ENCODE measurements at regions of chr18 and their contacts with region 1.

Region 1: GRCh38 chr18:1914490-1914889 is 656.8 kb downstream of the METTL4 start:
- DNase-seq: peak; percentile 22
- ATAC-seq: peak; percentile 90
- H3K4me3 ChIP-seq: no peak overlapping the region
- H3K27ac ChIP-seq: no peak overlapping the region
- H3K4me1 ChIP-seq: no peaks in the 10 kb centered on the region
- H3K27me3 ChIP-seq: no peaks in the 10 kb centered on the region
- CTCF ChIP-seq: peak; percentile 29 to 70 (median 60); a peak in 5 of 6 replicates
- POLR2A ChIP-seq: no peak
- RAD21 ChIP-seq: peak; percentile 58

Region 2: GRCh38 chr18:1676387-1676786 is 238.1 kb before region 1 on chr18:
- CTCF ChIA-PET with region 1: no interaction called
- POLR2A ChIA-PET with region 1: no interaction called
- RAD21 ChIA-PET with region 1: no interaction called
- intact Hi-C with region 1: no loop called
- DNase-seq: no peak
- ATAC-seq: no peak
- H3K4me3 ChIP-seq: no peak overlapping the region
- H3K27ac ChIP-seq: no peak overlapping the region
- H3K4me1 ChIP-seq: no peaks in the 10 kb centered on the region
- H3K27me3 ChIP-seq: no peaks in the 10 kb centered on the region
- CTCF ChIP-seq: no peak
- POLR2A ChIP-seq: no peak
- RAD21 ChIP-seq: no peak

Region 3: DNA sequence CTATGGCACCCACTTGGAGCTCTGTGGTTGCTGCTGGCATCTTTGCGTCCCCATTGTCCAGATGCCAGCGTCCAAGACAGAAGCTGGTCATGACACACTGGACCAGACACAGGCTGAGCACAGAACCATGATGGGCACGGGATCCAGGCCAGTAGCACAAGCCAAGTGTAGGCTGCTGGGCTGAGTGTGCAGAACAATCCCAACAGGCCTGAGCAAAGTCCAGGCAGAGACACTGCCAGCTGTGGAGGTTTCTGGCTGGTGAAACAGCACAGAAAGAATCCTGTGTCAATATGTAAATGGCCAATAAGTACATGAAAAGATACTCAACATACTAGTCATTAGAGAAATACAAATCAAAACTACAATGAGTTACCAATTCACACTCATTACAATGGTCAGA is 48.6 kb before region 1 on chr18:
- CTCF ChIA-PET with region 1: no interaction called
- POLR2A ChIA-PET with region 1: no interaction called
- RAD21 ChIA-PET with region 1: no interaction called
- intact Hi-C with region 1: no loop called
- DNase-seq: no peak
- ATAC-seq: no peak
- H3K4me3 ChIP-seq: no peak overlapping the region
- H3K27ac ChIP-seq: no peak overlapping the region
- H3K4me1 ChIP-seq: no peaks in the 10 kb centered on the region
- H3K27me3 ChIP-seq: peaks cover 3% of the 10 kb centered on the region; the same call in 1 of the 2 replicates
- CTCF ChIP-seq: no peak
- POLR2A ChIP-seq: no peak
- RAD21 ChIP-seq: no peak

Region 4: GRCh38 chr18:1982056-1982455 is 67.6 kb after region 1 on chr18:
- CTCF ChIA-PET with region 1: no interaction called
- POLR2A ChIA-PET with region 1: no interaction called
- RAD21 ChIA-PET with region 1: no interaction called
- intact Hi-C with region 1: no loop called
- DNase-seq: no peak
- ATAC-seq: no peak
- H3K4me3 ChIP-seq: no peak overlapping the region
- H3K27ac ChIP-seq: no peak overlapping the region
- H3K4me1 ChIP-seq: no peaks in the 10 kb centered on the region
- H3K27me3 ChIP-seq: no peaks in the 10 kb centered on the region
- CTCF ChIP-seq: no peak
- POLR2A ChIP-seq: no peak
- RAD21 ChIP-seq: no peak

Region 5: DNA sequence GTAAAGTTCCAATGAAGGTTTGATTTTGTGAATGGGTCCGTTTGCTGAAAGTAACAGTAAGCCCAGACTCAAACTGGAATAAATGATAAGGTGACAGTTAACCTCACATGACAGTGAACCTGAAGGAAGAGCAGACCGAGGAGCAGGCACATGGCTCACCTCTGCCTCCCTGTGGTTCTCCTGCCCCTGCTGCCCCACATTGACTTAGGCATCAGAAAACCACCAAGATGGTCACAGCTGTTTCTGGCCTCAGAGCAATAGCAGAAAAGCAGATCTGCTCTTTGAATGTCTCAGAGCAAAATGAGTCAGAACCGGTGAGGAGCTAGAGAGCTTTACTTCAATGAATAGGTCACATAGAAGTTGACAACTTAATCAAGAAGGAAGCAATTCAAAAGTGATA is 169.2 kb after region 1 on chr18:
- CTCF ChIA-PET with region 1: no interaction called
- POLR2A ChIA-PET with region 1: no interaction called
- RAD21 ChIA-PET with region 1: no interaction called
- intact Hi-C with region 1: loop called (anchors 1 kb)
- DNase-seq: no peak
- ATAC-seq: peak; percentile 71
- H3K4me3 ChIP-seq: no peak overlapping the region
- H3K27ac ChIP-seq: no peak overlapping the region
- H3K4me1 ChIP-seq: no peaks in the 10 kb centered on the region
- H3K27me3 ChIP-seq: no peaks in the 10 kb centered on the region
- CTCF ChIP-seq: peak; percentile 34 to 60 (median 56); a peak in 4 of 6 replicates
- POLR2A ChIP-seq: no peak
- RAD21 ChIP-seq: peak; percentile 67

Region 6: GRCh38 chr18:2154278-2154677 is 239.8 kb after region 1 on chr18:
- CTCF ChIA-PET with region 1: no interaction called
- POLR2A ChIA-PET with region 1: no interaction called
- RAD21 ChIA-PET with region 1: no interaction called
- intact Hi-C with region 1: no loop called
- DNase-seq: no peak
- ATAC-seq: no peak
- H3K4me3 ChIP-seq: no peak overlapping the region
- H3K27ac ChIP-seq: no peak overlapping the region
- H3K4me1 ChIP-seq: no peaks in the 10 kb centered on the region
- H3K27me3 ChIP-seq: no peaks in the 10 kb centered on the region; the same call in 1 of the 2 replicates
- CTCF ChIP-seq: no peak
- POLR2A ChIP-seq: no peak
- RAD21 ChIP-seq: no peak

Measured in HCT116 (cell line).